ENCODE measurements at regions of chr7 and their contacts with region 1.

Region 1: GRCh38 chr7:99408379-99409191 is at the starts of genes BUD31 and PDAP1:
- DNase-seq: peak; percentile 95
- H3K4me3 ChIP-seq: peak within 1 kb of the TSS; percentile 92
- H3K27ac ChIP-seq: peak within 1 kb of the TSS; percentile 69
- H3K4me1 ChIP-seq: peaks cover 32% of the 10 kb centered on the region
- CTCF ChIP-seq: no peak
- total RNA-seq, gene BUD31: 104 and 118 TPM in 2 replicates
- total RNA-seq, gene PDAP1: 33.7 and 50.0 TPM in 2 replicates

Region 2: DNA sequence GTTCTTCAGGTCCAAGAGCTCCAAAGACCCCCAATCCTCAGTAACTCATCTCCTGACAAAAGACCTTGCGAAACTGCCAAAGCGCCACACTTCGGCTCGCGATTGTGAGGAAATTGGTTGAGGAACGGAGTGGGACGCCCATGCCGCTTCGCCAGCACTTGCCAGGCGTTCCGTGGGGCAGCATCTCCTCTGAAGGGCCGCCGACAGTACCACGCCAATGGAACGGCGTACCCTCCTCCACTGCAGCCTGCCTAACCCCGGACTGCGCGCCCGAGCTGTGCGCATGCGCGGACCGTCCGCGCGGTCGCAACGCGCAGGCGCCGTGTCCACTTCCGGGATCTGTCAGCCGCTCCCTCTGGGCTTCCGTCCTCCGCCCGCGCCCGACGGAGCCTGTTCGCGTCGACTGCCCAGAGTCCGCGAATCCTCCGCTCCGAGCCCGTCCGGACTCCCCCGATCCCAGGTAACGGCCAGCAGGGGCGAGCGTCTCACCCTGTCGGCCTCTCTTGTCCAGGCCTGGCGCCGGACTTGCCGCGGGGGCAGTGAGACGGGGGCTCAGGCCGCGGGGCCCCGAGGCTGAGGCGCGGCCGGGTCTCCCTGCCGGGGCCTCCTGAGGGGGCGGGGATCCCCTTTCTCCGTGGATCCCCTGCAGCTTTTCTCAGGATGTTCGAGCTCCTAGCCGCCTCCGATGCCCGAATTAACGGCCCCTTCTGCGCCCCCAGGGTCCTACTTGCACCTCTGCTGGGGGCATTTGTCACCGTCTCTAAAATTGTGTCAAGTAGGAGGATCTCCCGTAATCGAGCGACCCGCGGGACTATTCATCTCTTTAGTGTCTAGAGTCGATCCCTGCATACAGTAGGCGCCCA is 82.8 kb before region 1 on chr7 and contains the start of gene ARPC1A:
- CTCF ChIA-PET with region 1: interaction called, 3 read pairs
- POLR2A ChIA-PET with region 1: interaction called, 8 read pairs
- intact Hi-C with region 1: loop called (anchors 1 kb)
- DNase-seq: peak; percentile 93
- H3K4me3 ChIP-seq: peak within 1 kb of the TSS; percentile 87
- H3K27ac ChIP-seq: peak within 1 kb of the TSS; percentile 16
- H3K4me1 ChIP-seq: peaks cover 19% of the 10 kb centered on the region
- CTCF ChIP-seq: 0 out of 2 replicates have a peak, but pooled peaks have one; percentile 14
- total RNA-seq, gene ARPC1A: 51.0 and 71.8 TPM in 2 replicates

Region 3: GRCh38 chr7:99353871-99354270 is 54.7 kb before region 1 on chr7:
- CTCF ChIA-PET with region 1: no interaction called
- POLR2A ChIA-PET with region 1: no interaction called
- intact Hi-C with region 1: no loop called
- DNase-seq: no peak
- H3K4me3 ChIP-seq: no peak overlapping the region
- H3K27ac ChIP-seq: no peak overlapping the region
- H3K4me1 ChIP-seq: no peaks in the 10 kb centered on the region
- CTCF ChIP-seq: no peak

Region 4: DNA sequence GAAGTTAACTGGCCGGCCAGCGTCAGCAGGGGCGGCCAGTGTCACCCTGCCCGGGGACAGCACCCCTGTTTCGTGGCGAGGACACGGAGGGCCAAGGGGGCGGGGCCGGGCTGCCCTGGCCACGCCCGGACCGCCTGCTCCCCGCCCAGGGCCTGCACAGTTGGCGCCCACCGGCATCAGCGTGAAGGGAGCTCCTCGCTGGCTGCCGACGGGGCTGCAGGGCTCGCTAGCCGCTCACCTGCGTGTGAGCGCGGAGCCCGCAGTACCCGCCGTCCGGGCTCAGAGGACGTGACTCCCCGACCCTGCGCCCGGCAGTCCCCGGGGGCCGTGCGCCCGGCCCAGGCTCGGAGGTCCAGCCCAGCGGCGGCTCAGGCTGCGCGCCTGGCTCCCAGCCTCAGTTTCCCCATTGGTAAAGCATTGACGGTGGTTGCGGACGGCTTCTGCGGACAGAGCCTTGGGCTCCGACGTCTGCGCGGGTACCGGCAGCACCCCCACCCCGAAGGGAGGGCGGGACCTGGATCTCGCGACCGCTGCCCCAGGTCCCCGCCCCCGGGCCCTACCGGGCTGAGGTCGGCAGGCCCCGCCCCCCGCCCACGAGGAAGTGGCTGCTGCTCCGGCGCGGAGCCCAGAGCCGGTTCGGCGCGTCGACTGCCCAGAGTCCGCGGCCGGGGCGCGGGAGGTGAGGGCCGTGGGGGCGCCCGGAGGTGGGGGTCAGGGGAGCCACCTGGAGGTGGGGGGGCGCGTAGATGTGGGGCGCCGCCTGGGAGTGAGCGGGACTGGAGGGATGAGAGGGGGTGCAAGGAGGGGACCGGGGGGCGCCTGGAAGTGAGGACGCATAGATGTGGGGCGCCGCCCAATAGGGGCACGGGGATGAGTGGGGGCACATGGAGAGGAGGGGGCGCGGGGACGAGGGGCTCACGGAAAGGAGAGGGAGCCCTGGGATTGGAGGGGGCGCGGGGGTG is 34.2 kb before region 1 on chr7 and contains the start of gene ARPC1B:
- CTCF ChIA-PET with region 1: no interaction called
- POLR2A ChIA-PET with region 1: interaction called, 4 read pairs
- intact Hi-C with region 1: loop called (anchors 5 kb)
- DNase-seq: peak; percentile 87
- H3K4me3 ChIP-seq: peak within 1 kb of the TSS; percentile 90
- H3K27ac ChIP-seq: peak within 1 kb of the TSS; percentile 55
- H3K4me1 ChIP-seq: peaks cover 22% of the 10 kb centered on the region
- CTCF ChIP-seq: no peak
- total RNA-seq, gene ARPC1B: 174 and 191 TPM in 2 replicates

Region 5: GRCh38 chr7:99380032-99380822 is 28.4 kb before region 1 on chr7:
- CTCF ChIA-PET with region 1: no interaction called
- POLR2A ChIA-PET with region 1: interaction called, 8 read pairs
- intact Hi-C with region 1: loop called (anchors 2 kb)
- DNase-seq: peak; percentile 82
- H3K4me3 ChIP-seq: peak overlapping the region; percentile 63
- H3K27ac ChIP-seq: peak overlapping the region; percentile 96
- H3K4me1 ChIP-seq: peaks cover 54% of the 10 kb centered on the region
- CTCF ChIP-seq: no peak

Region 6: GRCh38 chr7:99438573-99439480 is 30.2 kb after region 1 on chr7 and contains the starts of genes CPSF4 and PTCD1:
- CTCF ChIA-PET with region 1: no interaction called
- POLR2A ChIA-PET with region 1: interaction called, 11 read pairs
- intact Hi-C with region 1: loop called (anchors 1 kb)
- DNase-seq: peak; percentile 95
- H3K4me3 ChIP-seq: peak within 1 kb of the TSS; percentile 86
- H3K27ac ChIP-seq: peak within 1 kb of the TSS; percentile 46
- H3K4me1 ChIP-seq: peaks cover 18% of the 10 kb centered on the region
- CTCF ChIP-seq: no peak
- total RNA-seq, gene CPSF4: 75.3 and 84.4 TPM in 2 replicates
- total RNA-seq, gene PTCD1: 11.0 and 11.1 TPM in 2 replicates

Measured in OCI-LY7 (cell line).